Activated naive CD4-positive, alpha-beta T cell treated with anti-CD3 and anti-CD28 coated beads, Interleukin-2, amount 10 ng/mL, durations not matched to agents 7 days and 5 days (primary cell): ENCODE measurements at regions of chr6 and their contacts with region 1.

Region 1: DNA sequence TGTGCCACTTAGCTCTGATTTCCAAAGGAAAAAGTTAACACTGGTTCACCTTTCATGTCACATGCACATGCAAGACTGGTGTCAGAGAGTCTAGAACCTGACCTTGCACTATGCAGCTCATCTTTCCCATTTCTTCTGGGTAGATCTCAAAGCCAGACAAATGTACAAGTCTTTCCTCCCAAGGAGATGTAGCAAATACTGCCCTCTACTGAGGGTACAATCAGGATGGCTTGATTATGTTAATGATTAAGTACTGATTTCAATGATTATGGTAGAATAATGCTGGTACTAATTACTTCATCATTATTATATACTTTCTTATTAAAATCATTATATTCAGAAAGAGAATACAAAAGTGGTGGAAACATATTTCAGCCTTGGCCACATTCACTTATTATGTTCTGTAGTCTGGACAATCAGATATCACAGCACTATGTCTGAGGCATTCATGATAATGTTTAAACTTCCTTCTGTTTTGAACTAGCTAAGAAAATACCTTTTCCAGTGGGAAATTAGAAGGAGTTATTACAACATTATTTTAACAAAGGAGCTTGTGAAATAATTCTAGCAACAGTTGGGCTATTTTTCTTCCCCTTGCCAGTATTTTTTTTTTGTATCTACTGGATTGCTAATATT is 68.5 kb upstream of the FOXO3 start:
- DNase-seq: no peak
- H3K4me3 Mint-ChIP-seq: no peak overlapping the region
- H3K27ac Mint-ChIP-seq: no peak overlapping the region
- H3K4me1 Mint-ChIP-seq: no peaks in the 10 kb centered on the region
- H3K27me3 Mint-ChIP-seq: peaks cover 6% of the 10 kb centered on the region

Region 2: GRCh38 chr6:108113557-108114519 is 378.4 kb before region 1 on chr6:
- CTCF ChIA-PET with region 1: interaction called, 37 read pairs
- DNase-seq: peak; percentile 30
- H3K4me3 Mint-ChIP-seq: peak overlapping the region; percentile 23
- H3K27ac Mint-ChIP-seq: no peak overlapping the region
- H3K4me1 Mint-ChIP-seq: peaks cover 40% of the 10 kb centered on the region
- H3K27me3 Mint-ChIP-seq: peaks cover 96% of the 10 kb centered on the region

Region 3: GRCh38 chr6:108174371-108175175 is 317.7 kb before region 1 on chr6:
- CTCF ChIA-PET with region 1: interaction called, 11 read pairs
- DNase-seq: peak; percentile 67
- H3K4me3 Mint-ChIP-seq: no peak overlapping the region
- H3K27ac Mint-ChIP-seq: no peak overlapping the region
- H3K4me1 Mint-ChIP-seq: peaks cover 18% of the 10 kb centered on the region
- H3K27me3 Mint-ChIP-seq: peaks cover 83% of the 10 kb centered on the region